Activated B cell treated with CpG ODN at 0.5 μM for 24 hours (primary cell): ENCODE measurements at regions of chr2 and their contacts with region 1.

Region 1: GRCh38 chr2:118202707-118203303 is 114.5 kb downstream of the INSIG2 start:
- DNase-seq: peak; percentile 19
- ATAC-seq: peak; percentile 88
- H3K4me3 Mint-ChIP-seq: no peak overlapping the region
- H3K27ac Mint-ChIP-seq: no peak overlapping the region
- H3K4me1 Mint-ChIP-seq: peaks cover 5% of the 10 kb centered on the region
- H3K27me3 Mint-ChIP-seq: peaks cover 20% of the 10 kb centered on the region
- CTCF ChIP-seq: peak; percentile 72

Region 2: DNA sequence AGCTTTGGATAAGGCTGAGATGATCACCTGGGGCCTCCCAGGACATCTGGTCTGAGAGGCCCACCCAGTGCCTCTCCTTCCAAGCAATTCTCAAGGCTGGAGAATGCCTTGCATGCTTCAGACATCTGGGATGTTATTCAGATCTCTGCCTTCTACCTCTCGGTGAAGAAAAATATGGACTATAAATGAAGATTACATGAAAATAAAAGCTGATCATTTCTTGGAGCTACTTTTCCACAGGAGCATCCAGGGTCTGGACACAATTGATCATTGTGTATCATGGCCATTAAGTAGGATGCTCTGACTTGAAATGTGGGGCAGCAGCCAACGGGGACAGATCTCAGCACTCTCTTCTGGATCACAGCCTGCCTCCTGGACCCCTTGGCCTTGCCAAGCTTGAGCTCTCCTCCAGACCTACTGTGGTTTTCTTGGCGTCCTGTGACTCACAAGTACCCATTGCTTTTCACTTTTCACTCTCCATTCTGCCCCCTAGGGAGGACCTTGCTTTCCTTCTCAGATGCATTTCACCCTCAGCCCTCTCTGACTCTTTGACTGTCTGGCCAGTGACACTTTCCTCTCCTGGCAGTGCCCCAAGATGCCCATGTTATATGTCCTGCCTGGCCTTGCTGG is 88.6 kb after region 1 on chr2:
- CTCF ChIA-PET with region 1: no interaction called
- POLR2A ChIA-PET with region 1: no interaction called
- intact Hi-C with region 1: no loop called
- DNase-seq: no peak
- ATAC-seq: no peak
- H3K4me3 Mint-ChIP-seq: no peak overlapping the region
- H3K27ac Mint-ChIP-seq: no peak overlapping the region
- H3K4me1 Mint-ChIP-seq: no peaks in the 10 kb centered on the region
- H3K27me3 Mint-ChIP-seq: peaks cover 10% of the 10 kb centered on the region
- CTCF ChIP-seq: no peak

Region 3: DNA sequence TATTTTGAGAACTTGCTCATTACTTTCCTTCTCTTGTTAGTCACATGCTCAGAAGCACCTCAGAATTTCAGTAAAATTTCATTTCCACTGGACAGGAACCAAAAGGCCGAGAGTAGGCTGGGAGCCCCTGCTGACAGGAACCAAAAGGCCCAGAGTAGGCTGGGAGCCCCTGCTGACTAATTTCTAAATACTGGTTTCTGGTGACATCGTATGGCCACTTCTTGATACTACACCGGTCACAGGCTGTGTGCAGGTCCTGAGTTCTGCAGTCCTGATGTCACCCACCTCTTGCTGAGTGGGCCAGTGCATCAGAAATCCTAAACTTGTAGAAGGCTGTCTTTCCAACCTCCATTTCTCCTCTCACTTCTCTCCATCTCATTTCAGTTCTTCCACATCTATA is 662.3 kb after region 1 on chr2:
- CTCF ChIA-PET with region 1: no interaction called
- POLR2A ChIA-PET with region 1: no interaction called
- intact Hi-C with region 1: loop called (anchors 1 kb)
- DNase-seq: no peak
- ATAC-seq: peak; percentile 77
- H3K4me3 Mint-ChIP-seq: no peak overlapping the region
- H3K27ac Mint-ChIP-seq: no peak overlapping the region
- H3K4me1 Mint-ChIP-seq: no peaks in the 10 kb centered on the region
- H3K27me3 Mint-ChIP-seq: peaks cover 34% of the 10 kb centered on the region
- CTCF ChIP-seq: no peak